ENCODE measurements at regions of chr2 and their contacts with region 1.

Region 1: GRCh38 chr2:10493636-10494281 is 45.6 kb upstream of the ODC1 start:
- DNase-seq: peak; percentile 99
- H3K4me3 ChIP-seq: no peak overlapping the region
- H3K27ac ChIP-seq: peak overlapping the region; percentile 91
- H3K4me1 ChIP-seq: peaks cover 37% of the 10 kb centered on the region
- H3K27me3 ChIP-seq: no peaks in the 10 kb centered on the region
- CTCF ChIP-seq: no peak

Region 2: GRCh38 chr2:10457911-10458604 is 35.7 kb before region 1 on chr2:
- CTCF ChIA-PET with region 1: no interaction called
- dilution Hi-C with region 1: loop called (anchors 5 kb)
- in situ Hi-C with region 1: loop called in 1 of 2 experiments (anchors 5 kb)
- intact Hi-C with region 1: no loop called
- DNase-seq: peak; percentile 90
- H3K4me3 ChIP-seq: no peak overlapping the region
- H3K27ac ChIP-seq: peak overlapping the region; percentile 56
- H3K4me1 ChIP-seq: peaks cover 36% of the 10 kb centered on the region
- H3K27me3 ChIP-seq: no peaks in the 10 kb centered on the region
- CTCF ChIP-seq: no peak

Region 3: GRCh38 chr2:10514743-10515142 is 21.0 kb after region 1 on chr2:
- CTCF ChIA-PET with region 1: interaction called, 5 read pairs
- dilution Hi-C with region 1: no loop called
- in situ Hi-C with region 1: no loop called
- intact Hi-C with region 1: loop called (anchors 1 kb)
- DNase-seq: peak; percentile 98
- H3K4me3 ChIP-seq: no peak overlapping the region
- H3K27ac ChIP-seq: peak overlapping the region; percentile 95
- H3K4me1 ChIP-seq: peaks cover 17% of the 10 kb centered on the region
- H3K27me3 ChIP-seq: no peaks in the 10 kb centered on the region
- CTCF ChIP-seq: no peak

Region 4: GRCh38 chr2:10538224-10538894 is 44.6 kb after region 1 on chr2:
- CTCF ChIA-PET with region 1: interaction called, 6 read pairs
- dilution Hi-C with region 1: no loop called
- in situ Hi-C with region 1: no loop called
- intact Hi-C with region 1: loop called (anchors 2 kb)
- DNase-seq: peak; percentile 92
- H3K4me3 ChIP-seq: no peak overlapping the region
- H3K27ac ChIP-seq: peak overlapping the region; percentile 30
- H3K4me1 ChIP-seq: peaks cover 14% of the 10 kb centered on the region
- H3K27me3 ChIP-seq: no peaks in the 10 kb centered on the region
- CTCF ChIP-seq: no peak

Region 5: DNA sequence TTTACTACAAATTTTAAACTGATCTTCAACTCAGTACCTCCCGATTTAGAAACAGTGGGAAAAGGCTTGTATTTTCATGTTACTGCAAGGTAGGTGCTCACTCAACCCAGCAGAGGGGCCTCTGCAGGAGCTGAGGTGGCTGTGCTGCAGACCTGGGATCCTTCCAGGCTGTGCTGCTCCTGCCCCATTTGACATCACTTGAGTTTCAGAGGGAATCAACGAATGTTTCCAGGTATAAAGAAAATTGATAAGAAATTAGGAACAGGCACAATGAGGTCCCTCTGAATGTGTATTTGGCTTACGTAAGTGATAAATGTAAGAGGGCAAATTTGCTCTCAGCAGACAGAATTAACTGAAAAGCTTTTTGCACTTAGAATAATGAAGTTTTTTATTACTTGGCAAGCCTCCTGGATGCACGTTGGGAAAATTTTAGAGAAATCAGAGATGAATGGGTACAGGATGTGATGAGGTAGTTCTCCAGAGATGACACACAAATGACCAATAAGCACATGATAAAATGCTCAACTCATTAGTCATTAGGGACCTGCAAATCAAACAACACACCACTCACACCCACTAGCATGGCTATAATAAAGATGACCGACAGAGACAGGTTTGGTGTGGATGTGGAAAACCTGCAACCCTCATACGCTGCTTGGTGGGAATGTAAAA is 82.0 kb after region 1 on chr2:
- CTCF ChIA-PET with region 1: interaction called, 3 read pairs
- dilution Hi-C with region 1: no loop called
- in situ Hi-C with region 1: no loop called
- intact Hi-C with region 1: loop called (anchors 5 kb)
- DNase-seq: peak; percentile 92
- H3K4me3 ChIP-seq: no peak overlapping the region
- H3K27ac ChIP-seq: peak overlapping the region; percentile 95
- H3K4me1 ChIP-seq: peaks cover 47% of the 10 kb centered on the region
- H3K27me3 ChIP-seq: no peaks in the 10 kb centered on the region
- CTCF ChIP-seq: no peak

Measured in mammary epithelial cell (primary cell).